Activated CD8-positive, alpha-beta T cell treated with anti-CD3 and anti-CD28 coated beads for 36 hours (primary cell): ENCODE measurements at regions of chr3 and their contacts with region 1.

Region 1: GRCh38 chr3:133821767-133822638 is 16.4 kb downstream of the SRPRB start:
- DNase-seq: no peak
- ATAC-seq: no peak
- H3K4me3 Mint-ChIP-seq: no peak overlapping the region
- H3K27ac Mint-ChIP-seq: no peak overlapping the region
- H3K4me1 Mint-ChIP-seq: no peaks in the 10 kb centered on the region
- H3K27me3 Mint-ChIP-seq: no peaks in the 10 kb centered on the region
- CTCF ChIP-seq: no peak

Region 2: GRCh38 chr3:133927540-133928066 is 105.6 kb after region 1 on chr3:
- CTCF ChIA-PET with region 1: interaction called, 15 read pairs
- POLR2A ChIA-PET with region 1: interaction called, 3 read pairs
- intact Hi-C with region 1: loop called (anchors 2 kb)
- DNase-seq: peak; percentile 75
- ATAC-seq: peak; percentile 87
- H3K4me3 Mint-ChIP-seq: peak overlapping the region; percentile 49
- H3K27ac Mint-ChIP-seq: no peak overlapping the region
- H3K4me1 Mint-ChIP-seq: peaks cover 6% of the 10 kb centered on the region
- H3K27me3 Mint-ChIP-seq: peaks cover 4% of the 10 kb centered on the region
- CTCF ChIP-seq: peak; percentile 78